Heart right ventricle (tissue), 16 donors: ENCODE measurements at regions of chr1 and their contacts with region 1.

Region 1: DNA sequence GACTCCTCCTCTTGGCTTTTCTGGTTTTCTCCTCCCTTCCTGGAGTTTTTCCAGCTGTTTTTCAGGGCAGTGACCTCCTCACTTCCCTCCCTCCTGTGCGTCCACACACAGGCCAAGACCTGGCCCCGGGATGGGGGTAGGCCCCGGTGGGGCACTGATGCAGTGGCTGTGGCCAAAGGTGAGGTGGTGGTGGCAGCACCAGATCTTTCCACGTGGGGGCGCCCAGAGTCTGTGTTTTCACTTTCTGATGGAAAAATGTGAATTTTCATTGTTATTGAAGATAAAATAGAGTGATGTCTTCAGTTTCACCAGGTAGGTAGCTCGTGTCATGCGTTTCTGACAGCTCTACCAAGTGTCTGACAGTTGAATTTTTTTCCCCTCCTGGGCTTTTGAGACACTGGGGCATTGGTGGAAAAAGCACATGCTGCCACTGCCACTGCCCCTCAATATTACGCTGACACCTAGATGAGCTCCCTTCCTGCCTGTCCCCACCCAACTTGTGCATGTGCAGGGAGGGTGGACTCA is 39.9 kb upstream of the MAGOH start:
- DNase-seq: peak; percentile 40 to 58
- ATAC-seq: peak in 7 of 8 donors; percentile 50 to 67 (median 58)
- H3K4me3 ChIP-seq: no peak overlapping the region
- H3K27ac ChIP-seq: no peak overlapping the region
- H3K4me1 ChIP-seq: no peaks in the 10 kb centered on the region
- H3K27me3 ChIP-seq: peaks cover 0 to 8% (median 0%) of the 10 kb centered on the region in 7 donors
- CTCF ChIP-seq: peak; percentile 82 to 93 (median 90)

Region 2: GRCh38 chr1:53334781-53335180 is 56.5 kb after region 1 on chr1:
- intact Hi-C with region 1: no loop called
- DNase-seq: no peak
- ATAC-seq: no peak
- H3K4me3 ChIP-seq: no peak overlapping the region
- H3K27ac ChIP-seq: no peak overlapping the region
- H3K4me1 ChIP-seq: no peaks in the 10 kb centered on the region
- H3K27me3 ChIP-seq: peaks cover 0 to 22% (median 13%) of the 10 kb centered on the region in 7 donors
- CTCF ChIP-seq: no peak

Region 3: DNA sequence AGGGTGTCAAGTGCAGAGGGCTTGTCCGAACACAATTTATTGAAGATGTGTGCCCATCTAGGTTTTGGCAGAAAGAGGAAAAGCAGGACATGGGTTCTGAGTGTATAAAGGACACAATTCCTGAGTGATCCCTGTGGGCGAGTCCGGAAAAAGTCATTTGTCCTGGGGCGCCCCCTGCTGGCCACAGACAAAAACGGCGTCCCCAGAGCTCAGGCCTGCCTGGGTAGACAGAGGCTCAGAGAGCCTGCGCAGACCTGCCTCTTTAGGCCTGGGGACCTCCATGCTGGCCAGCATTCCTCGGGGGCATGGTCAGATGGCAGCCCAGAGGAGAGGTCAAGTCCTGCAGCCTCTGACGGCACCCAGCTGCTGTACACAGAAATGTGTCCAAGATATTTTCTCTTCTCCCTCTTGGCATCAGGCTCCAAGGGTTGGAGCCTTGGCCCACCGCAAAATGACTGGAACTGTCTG is 115.1 kb after region 1 on chr1:
- intact Hi-C with region 1: loop called (anchors 1 to 2 kb)
- DNase-seq: peak; percentile 71 to 80
- ATAC-seq: peak; percentile 82 to 95 (median 87)
- H3K4me3 ChIP-seq: no peak overlapping the region
- H3K27ac ChIP-seq: no peak overlapping the region
- H3K4me1 ChIP-seq: peaks cover 0 to 10% (median 0%) of the 10 kb centered on the region in 9 donors
- H3K27me3 ChIP-seq: peaks cover 0 to 28% (median 13%) of the 10 kb centered on the region in 7 donors
- CTCF ChIP-seq: peak; percentile 86 to 97 (median 94)

Region 4: GRCh38 chr1:53754484-53755312 is 476.4 kb after region 1 on chr1:
- intact Hi-C with region 1: loop called in 1 of 10 experiments (anchors 10 kb)
- DNase-seq: peak in 1 of 2 donors; percentile 38
- ATAC-seq: peak in 2 of 8 donors; percentile 56 to 63
- H3K4me3 ChIP-seq: no peak overlapping the region
- H3K27ac ChIP-seq: no peak overlapping the region
- H3K4me1 ChIP-seq: no peaks in the 10 kb centered on the region
- H3K27me3 ChIP-seq: no peaks in the 10 kb centered on the region
- CTCF ChIP-seq: peak; percentile 19 to 80 (median 74)